BJ (cell line): ENCODE measurements at regions of chr12 and their contacts with region 1.

Region 1: DNA sequence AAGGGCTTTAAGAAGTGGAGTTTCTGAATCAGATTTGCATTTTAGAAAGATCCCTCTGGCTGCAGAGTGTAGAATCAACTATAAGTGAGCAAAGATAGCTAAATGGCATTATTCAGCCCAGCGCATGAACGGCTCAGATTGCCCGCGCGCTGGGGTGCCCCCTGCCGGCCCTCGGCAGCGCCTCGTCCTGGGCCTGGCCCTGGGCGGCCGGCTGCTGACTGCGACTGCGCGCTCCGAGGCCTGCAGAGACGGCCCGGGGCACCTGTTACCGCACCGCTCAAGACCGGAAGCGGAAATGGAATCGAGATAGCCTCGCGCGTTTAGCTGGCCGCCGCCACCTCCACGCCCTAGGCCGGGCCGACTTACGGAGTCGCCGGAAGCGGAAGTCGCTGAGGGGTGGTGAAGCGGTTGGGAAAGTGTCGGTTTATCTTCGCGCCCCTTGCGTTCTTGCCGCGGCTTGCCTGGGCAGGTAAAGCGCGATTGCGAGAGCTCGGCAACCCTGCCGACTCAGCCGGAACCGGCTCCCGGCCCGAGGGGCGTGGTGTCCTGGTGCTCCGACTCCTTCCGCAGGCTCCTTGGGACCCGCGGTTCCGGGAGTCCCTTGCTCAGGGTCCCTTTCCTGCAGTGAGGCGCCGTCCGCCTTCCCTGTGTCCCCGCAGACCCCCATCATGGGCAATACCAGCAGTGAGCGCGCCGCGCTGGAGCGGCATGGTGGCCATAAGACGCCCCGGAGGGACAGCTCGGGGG is at the start of gene PRKAB1:
- DNase-seq: peak; percentile 83
- H3K4me3 ChIP-seq: peak within 1 kb of the TSS; percentile 85
- H3K27me3 ChIP-seq: peaks cover 1% of the 10 kb centered on the region; the same call in 1 of the 2 replicates
- CTCF ChIP-seq: peak; percentile 80
- polyA plus RNA-seq, gene PRKAB1: 34.6 and 45.7 TPM in 2 replicates

Region 2: GRCh38 chr12:119512772-119513497 is 154.8 kb before region 1 on chr12:
- CTCF ChIA-PET with region 1: no interaction called
- POLR2A ChIA-PET with region 1: no interaction called
- DNase-seq: no peak
- H3K4me3 ChIP-seq: no peak overlapping the region
- H3K27me3 ChIP-seq: no peaks in the 10 kb centered on the region
- CTCF ChIP-seq: no peak

Region 3: DNA sequence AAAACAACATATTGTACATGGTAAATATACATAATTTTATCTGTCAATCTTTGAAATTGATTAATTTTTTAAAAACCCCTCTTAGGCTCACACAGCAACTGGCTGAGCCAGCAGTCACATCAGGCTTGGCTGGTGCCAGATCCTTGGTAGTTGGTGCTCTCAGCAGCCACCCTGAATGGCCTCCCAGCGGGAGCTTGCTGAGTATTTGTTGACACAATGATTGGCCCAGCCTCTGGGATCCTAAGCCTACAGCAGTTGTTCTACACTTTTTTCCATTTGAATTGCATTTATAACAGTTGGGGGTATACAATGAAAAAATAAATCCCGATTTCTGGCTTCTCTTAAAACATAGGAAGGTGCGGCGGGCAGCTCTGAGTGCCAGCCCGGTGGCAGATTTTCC is 11.3 kb after region 1 on chr12:
- CTCF ChIA-PET with region 1: interaction called, 16 read pairs
- POLR2A ChIA-PET with region 1: no interaction called
- DNase-seq: no peak
- H3K4me3 ChIP-seq: no peak overlapping the region
- H3K27me3 ChIP-seq: no peaks in the 10 kb centered on the region
- CTCF ChIP-seq: no peak